ENCODE measurements at regions of chr10 and their contacts with region 1.

Region 1: DNA sequence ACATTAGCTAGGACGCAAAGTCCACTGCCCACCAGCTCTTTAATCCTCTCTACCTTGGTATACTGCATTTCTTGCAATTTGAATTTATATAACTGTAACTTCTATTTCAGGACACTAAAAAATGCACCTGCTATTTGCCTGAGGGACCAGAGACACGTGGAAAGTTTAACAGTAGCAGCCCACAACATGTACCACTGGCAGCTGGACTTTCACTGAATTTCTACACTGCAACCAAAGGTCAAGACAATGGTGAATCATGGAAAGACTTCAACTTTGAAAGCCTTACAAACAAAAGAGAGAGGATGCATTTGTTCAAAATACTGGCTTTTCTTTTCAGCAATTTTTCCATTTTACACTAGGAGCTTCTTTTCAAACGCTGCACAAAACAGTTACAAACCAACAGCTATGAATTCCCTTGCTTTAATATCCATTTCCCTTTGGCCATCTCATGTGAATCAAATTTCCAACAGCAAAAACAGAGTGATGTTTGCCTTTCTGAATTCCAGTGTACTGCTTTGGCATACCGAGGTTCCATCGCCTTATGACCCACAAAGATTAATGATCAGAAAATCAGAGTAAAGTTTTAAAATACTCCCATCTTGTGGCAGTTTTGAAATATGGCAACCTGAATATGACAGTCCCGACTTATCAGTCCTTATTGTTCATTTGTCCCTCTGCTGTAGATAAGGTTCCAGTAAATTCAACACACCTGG is 29.9 kb upstream of the HNRNPH3 start:
- DNase-seq: no peak
- H3K4me3 ChIP-seq: no peak overlapping the region
- H3K27ac ChIP-seq: peak overlapping the region in 2 of 4 donors; percentile 3 to 44
- H3K4me1 ChIP-seq: peaks cover 0 to 41% (median 11%) of the 10 kb centered on the region in 4 donors
- H3K27me3 ChIP-seq: no peaks in the 10 kb centered on the region
- CTCF ChIP-seq: peak; percentile 44 to 69 (median 51)
- EP300 ChIP-seq: no peak
- POLR2A ChIP-seq: no peak

Region 2: GRCh38 chr10:68212721-68213352 is 89.1 kb before region 1 on chr10:
- in situ Hi-C with region 1: loop called in 2 of 4 experiments (anchors 5 to 10 kb)
- intact Hi-C with region 1: no loop called
- DNase-seq: no peak
- H3K4me3 ChIP-seq: no peak overlapping the region
- H3K27ac ChIP-seq: no peak overlapping the region
- H3K4me1 ChIP-seq: no peaks in the 10 kb centered on the region
- H3K27me3 ChIP-seq: no peaks in the 10 kb centered on the region
- CTCF ChIP-seq: peak; percentile 54 to 64 (median 61)
- EP300 ChIP-seq: no peak
- POLR2A ChIP-seq: no peak

Region 3: GRCh38 chr10:68223535-68224165 is 78.3 kb before region 1 on chr10:
- in situ Hi-C with region 1: loop called in 3 of 4 experiments (anchors 5 to 10 kb)
- intact Hi-C with region 1: no loop called
- DNase-seq: peak; percentile 27
- H3K4me3 ChIP-seq: no peak overlapping the region
- H3K27ac ChIP-seq: no peak overlapping the region
- H3K4me1 ChIP-seq: peaks cover 0 to 10% (median 5%) of the 10 kb centered on the region in 4 donors
- H3K27me3 ChIP-seq: no peaks in the 10 kb centered on the region
- CTCF ChIP-seq: peak in 2 of 5 experiments; percentile 17 to 22
- EP300 ChIP-seq: no peak
- POLR2A ChIP-seq: no peak

Region 4: DNA sequence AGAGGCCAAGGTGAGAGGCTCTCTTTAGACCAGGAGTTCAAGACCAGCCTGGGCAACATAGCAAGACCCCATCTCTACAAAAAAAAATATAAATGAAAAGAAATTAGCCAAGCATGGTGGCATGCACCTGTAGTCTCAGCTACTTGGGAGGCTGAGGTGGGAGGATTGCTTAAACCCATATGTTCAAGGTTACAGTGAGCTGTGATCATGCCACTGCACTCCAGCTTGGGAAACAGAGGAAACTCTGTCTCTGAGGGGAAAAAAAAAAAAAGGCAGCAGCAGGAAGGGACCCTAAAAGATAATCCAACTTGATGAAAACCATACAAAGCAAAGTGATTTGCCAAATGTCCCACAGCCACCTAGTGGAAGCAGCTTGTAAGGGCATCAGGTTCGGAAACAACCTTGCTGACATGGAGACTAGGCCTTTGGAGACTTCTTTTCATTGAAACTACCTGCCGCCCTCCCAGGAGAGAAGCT is 46.4 kb after region 1 on chr10:
- in situ Hi-C with region 1: no loop called
- intact Hi-C with region 1: no loop called
- DNase-seq: peak; percentile 38
- H3K4me3 ChIP-seq: no peak overlapping the region
- H3K27ac ChIP-seq: no peak overlapping the region
- H3K4me1 ChIP-seq: no peaks in the 10 kb centered on the region
- H3K27me3 ChIP-seq: no peaks in the 10 kb centered on the region
- CTCF ChIP-seq: peak; percentile 51 to 74 (median 68)
- EP300 ChIP-seq: no peak
- POLR2A ChIP-seq: no peak